ENCODE measurements at regions of chr3 and their contacts with region 1.

Region 1: DNA sequence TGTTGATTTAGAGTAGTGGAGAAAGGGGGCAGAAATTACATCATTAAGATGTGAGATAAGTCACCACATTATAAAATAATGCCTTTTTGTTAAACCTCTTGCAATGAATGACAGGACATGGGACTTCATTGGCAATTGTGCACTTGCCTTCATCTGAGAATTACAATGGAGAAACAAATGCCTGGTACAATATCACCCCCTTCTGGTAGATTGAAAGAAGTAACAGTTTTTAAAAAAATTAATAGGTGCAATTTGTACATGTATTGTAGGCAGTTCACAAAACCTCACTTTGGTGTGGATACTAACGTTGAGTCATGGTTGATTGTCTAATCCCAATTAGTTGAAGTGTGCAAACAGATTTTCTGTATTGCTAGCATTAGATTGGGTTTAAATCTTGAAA is 4.6 kb upstream of the P2RY14 start:
- DNase-seq: peak; percentile 73
- H3K4me3 ChIP-seq: no peak overlapping the region
- H3K27ac ChIP-seq: no peak overlapping the region
- H3K4me1 ChIP-seq: no peaks in the 10 kb centered on the region
- H3K27me3 ChIP-seq: no peaks in the 10 kb centered on the region
- CTCF ChIP-seq: peak; percentile 67

Region 2: DNA sequence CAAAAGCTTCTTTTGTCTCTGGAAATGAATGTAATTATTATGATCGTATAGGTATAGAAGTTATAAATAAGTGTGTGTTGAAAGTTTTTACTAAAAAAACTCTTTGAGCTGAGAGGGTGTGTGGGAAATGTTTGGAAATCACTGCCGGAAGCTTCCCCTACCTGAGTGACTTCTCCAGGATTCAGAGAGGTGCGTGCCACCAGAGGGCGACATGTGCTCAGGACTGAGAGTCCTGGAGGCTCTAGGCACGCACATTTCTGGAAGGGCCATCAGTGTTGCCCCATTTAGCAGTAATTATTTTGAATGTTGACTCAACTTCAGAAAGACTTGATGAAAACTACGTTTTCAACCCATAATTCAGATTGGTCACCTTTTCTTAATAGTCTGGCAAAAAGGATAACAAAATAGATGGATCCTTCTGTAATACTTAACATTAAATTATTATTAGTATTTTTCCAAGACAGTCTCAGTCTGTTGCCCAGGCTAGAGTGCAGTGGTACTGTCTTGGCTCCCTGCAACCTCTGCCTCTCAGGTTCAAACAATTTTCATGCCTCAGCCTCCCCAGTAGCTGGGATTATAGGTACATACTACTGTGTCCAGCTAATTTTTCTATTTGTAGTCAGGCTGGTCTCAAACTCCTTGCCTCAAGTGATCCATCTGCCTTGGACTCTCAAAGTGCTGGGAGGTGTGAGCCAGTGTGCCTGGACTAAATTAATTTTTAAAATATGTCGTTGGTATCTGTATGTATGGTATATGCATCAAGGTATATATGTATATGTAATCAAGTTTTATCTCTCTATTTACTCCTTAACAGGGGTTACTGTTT is 114.4 kb before region 1 on chr3:
- CTCF ChIA-PET with region 1: no interaction called
- POLR2A ChIA-PET with region 1: no interaction called
- intact Hi-C with region 1: loop called (anchors 1 kb)
- DNase-seq: peak; percentile 72
- H3K4me3 ChIP-seq: no peak overlapping the region
- H3K27ac ChIP-seq: no peak overlapping the region
- H3K4me1 ChIP-seq: no peaks in the 10 kb centered on the region
- H3K27me3 ChIP-seq: no peaks in the 10 kb centered on the region
- CTCF ChIP-seq: peak; percentile 90

Region 3: DNA sequence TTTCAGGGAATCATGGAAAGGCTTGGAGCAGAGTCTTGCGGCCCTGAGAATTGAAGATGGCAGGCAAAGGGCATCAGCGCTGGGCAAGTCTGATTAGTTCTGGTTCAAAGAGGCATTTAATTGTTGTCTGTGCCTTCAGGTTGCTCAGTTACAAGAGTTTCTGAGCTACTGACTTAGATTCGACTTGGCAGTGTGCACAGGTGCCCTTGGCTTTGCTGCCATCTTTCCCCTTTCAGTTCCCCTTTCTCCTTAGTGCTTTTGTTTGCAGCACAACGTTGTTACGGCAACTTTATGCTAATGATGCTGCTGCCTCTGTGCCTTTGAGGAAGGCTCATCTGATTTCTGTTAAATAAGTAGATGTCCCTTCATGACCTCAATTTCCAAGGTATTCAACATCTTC is 17.1 kb before region 1 on chr3:
- CTCF ChIA-PET with region 1: no interaction called
- POLR2A ChIA-PET with region 1: no interaction called
- intact Hi-C with region 1: no loop called
- DNase-seq: peak; percentile 14
- H3K4me3 ChIP-seq: no peak overlapping the region
- H3K27ac ChIP-seq: no peak overlapping the region
- H3K4me1 ChIP-seq: peaks cover 17% of the 10 kb centered on the region
- H3K27me3 ChIP-seq: no peaks in the 10 kb centered on the region
- CTCF ChIP-seq: no peak